ENCODE measurements at regions of chr15 and their contacts with region 1.

Region 1: DNA sequence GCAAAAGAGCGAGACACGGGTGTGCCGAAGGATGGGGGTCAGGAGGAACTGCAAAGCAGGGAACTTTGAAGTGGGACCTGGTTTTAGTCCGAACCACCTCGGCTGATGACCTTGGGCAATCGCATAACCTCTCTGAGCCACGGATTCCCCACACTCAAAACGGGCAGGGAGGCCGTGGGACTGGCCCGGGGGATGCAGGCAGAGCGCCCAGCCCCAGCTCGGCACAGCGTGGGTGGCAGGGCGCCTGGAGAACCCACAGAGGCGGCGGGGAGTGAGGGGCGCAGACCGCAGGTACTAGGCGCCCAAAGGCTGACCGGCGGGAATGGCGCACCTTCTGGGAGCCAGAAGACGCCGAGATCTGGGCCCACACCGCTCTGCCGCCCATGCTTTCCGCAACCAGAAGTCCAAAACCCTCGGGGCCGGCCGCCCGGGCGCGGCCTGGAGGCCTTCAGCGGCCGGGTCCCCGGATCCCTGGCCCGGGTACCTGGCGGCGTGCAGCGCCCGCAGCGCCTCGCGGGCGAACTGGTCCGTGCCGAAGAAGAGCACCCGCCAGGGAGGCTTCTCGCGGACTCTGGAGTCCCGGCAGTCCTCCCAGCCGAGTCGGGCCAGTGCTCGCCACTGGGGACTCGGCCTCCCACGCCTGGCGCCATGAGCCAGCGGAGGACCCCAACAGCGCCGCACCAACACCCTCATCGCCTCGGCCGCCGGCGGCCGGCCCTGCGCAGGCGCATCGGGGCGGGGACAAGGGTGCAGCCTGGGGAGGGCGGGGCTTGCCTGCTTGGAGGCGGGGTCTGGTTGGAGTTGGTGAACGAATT is at the start of gene MTFMT:
- DNase-seq: peak in 1 of 2 experiments; percentile 98
- H3K4me3 ChIP-seq: peak within 1 kb of the TSS; percentile 75 to 93 (median 88)
- H3K27ac ChIP-seq: no peak within 1 kb of the TSS; the same call in 1 of the 2 replicates
- H3K4me1 ChIP-seq: peaks cover 0 to 2% (median 0%) of the 10 kb centered on the region in 4 experiments; a peak in 1 of 7 replicates
- H3K27me3 ChIP-seq: no peaks in the 10 kb centered on the region
- CTCF ChIP-seq: no peak; a peak in 1 of 4 replicates
- EP300 ChIP-seq: no peak
- POLR2A ChIP-seq: peak; percentile 89 to 90
- RAD21 ChIP-seq: no peak; a peak in 1 of 4 replicates
- total RNA-seq, gene MTFMT: 16.5 and 20.8 TPM in 2 replicates

Region 2: GRCh38 chr15:64961013-64961412 is 68.1 kb before region 1 on chr15:
- CTCF ChIA-PET with region 1: no interaction called
- POLR2A ChIA-PET with region 1: no interaction called
- DNase-seq: no peak
- H3K4me3 ChIP-seq: no peak overlapping the region
- H3K27ac ChIP-seq: no peak overlapping the region
- H3K4me1 ChIP-seq: no peaks in the 10 kb centered on the region
- H3K27me3 ChIP-seq: no peaks in the 10 kb centered on the region
- CTCF ChIP-seq: peak; percentile 41 to 61 (median 55)
- EP300 ChIP-seq: no peak
- POLR2A ChIP-seq: no peak
- RAD21 ChIP-seq: peak; percentile 30 to 50; a peak in 3 of 4 replicates

Region 3: GRCh38 chr15:65054333-65055200 is 25.4 kb after region 1 on chr15:
- CTCF ChIA-PET with region 1: interaction called, 57 read pairs
- POLR2A ChIA-PET with region 1: no interaction called
- DNase-seq: peak in 1 of 2 experiments; percentile 88
- H3K4me3 ChIP-seq: no peak overlapping the region
- H3K27ac ChIP-seq: no peak overlapping the region
- H3K4me1 ChIP-seq: no peaks in the 10 kb centered on the region
- H3K27me3 ChIP-seq: no peaks in the 10 kb centered on the region; a peak in 2 of 7 replicates
- CTCF ChIP-seq: peak; percentile 95 to 97 (median 97)
- EP300 ChIP-seq: no peak
- POLR2A ChIP-seq: no peak
- RAD21 ChIP-seq: peak; percentile 96

Region 4: DNA sequence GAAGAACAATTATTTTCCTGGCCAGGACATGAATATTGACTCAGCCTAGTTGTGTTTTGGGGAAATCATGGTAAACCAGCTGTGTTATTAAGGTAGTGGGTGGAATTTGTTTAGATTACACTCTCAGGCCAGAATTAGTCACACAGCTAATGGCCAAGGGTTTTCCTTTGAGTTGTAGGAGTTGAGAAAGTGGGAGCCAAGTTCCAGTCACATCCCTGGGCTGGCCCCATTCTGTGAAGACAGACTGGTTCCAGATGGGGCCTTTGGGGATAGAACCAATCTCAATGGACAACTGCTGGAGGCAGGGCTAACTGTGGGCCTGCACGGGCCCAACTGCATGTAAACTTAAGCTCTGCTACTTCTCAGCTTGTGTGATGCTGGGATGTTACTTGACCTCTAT is 40.1 kb after region 1 on chr15:
- CTCF ChIA-PET with region 1: interaction called, 21 read pairs
- POLR2A ChIA-PET with region 1: no interaction called
- DNase-seq: no peak
- H3K4me3 ChIP-seq: no peak overlapping the region
- H3K27ac ChIP-seq: no peak overlapping the region
- H3K4me1 ChIP-seq: peaks cover 5 to 19% (median 7%) of the 10 kb centered on the region in 4 experiments
- H3K27me3 ChIP-seq: peaks cover 0 to 6% (median 1%) of the 10 kb centered on the region in 4 experiments; a peak in 3 of 7 replicates
- CTCF ChIP-seq: no peak
- EP300 ChIP-seq: no peak
- POLR2A ChIP-seq: no peak
- RAD21 ChIP-seq: no peak

Region 5: DNA sequence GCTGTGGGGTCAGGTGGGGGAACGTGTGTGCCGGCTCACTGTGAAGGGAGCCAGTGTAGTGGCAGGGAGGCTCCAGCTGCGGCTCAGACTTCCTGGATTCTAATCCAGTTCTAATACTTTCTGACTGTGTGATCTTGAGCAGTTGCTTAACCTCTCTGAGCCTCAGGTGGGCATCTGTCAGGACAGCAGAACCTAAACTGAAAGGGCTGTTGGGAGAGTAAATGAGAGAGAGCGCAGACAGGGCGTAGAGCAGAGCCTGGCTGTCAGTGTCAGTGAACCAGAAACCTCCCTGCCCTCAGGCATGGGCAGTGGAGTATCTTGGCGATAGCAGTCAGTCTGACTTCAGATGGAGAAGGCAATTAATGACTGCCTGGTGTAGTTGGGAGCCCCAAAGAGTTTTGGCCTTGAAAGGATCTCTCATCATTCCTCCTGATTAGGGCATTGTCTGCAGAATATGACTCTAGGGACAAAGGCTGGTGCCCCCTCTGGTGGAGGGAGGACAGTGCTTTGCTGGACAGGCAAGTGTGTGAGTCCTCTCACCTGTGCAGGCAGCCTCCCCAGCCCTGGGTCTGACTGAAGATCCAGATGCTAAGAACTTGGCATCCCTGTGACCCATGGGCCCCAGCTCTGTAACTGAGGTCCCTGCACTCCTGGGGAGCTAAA is 57.0 kb after region 1 on chr15:
- CTCF ChIA-PET with region 1: interaction called, 43 read pairs
- POLR2A ChIA-PET with region 1: no interaction called
- DNase-seq: peak in 1 of 2 experiments; percentile 77
- H3K4me3 ChIP-seq: no peak overlapping the region
- H3K27ac ChIP-seq: no peak overlapping the region
- H3K4me1 ChIP-seq: peaks cover 15 to 32% (median 23%) of the 10 kb centered on the region in 4 experiments
- H3K27me3 ChIP-seq: peaks cover 0 to 7% (median 2%) of the 10 kb centered on the region in 4 experiments; a peak in 5 of 7 replicates
- CTCF ChIP-seq: peak; percentile 68 to 87 (median 82)
- EP300 ChIP-seq: no peak
- POLR2A ChIP-seq: no peak
- RAD21 ChIP-seq: peak; percentile 47 to 62

Region 6: DNA sequence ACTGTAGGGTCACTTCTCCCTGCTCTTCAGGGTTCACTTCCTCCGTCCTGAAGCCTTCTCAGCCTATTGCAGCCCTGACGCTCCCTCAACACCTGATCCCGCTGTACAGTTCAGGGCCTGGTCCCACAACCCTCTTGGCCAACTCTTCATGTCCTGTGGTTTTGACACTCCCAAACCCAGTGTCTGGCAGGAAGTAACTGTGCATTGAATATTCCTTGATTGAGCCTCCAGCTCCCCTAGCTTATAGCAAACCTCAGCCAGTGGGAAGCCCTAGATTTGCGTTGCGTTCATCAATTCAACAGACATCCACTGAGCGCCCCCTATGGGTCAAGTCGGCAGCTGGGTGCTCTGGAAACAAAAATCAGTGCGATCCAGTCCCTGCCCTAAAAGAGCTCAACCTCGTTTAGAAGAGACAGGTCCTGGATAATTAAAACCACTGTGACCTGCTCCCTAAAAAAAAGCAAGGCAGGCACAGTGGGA is 72.3 kb after region 1 on chr15:
- CTCF ChIA-PET with region 1: interaction called, 33 read pairs
- POLR2A ChIA-PET with region 1: interaction called, 3 read pairs
- DNase-seq: peak; percentile 73 to 96
- H3K4me3 ChIP-seq: peak overlapping the region; percentile 36 to 67 (median 58)
- H3K27ac ChIP-seq: no peak overlapping the region
- H3K4me1 ChIP-seq: peaks cover 0 to 2% (median 0%) of the 10 kb centered on the region in 4 experiments; a peak in 2 of 7 replicates
- H3K27me3 ChIP-seq: peaks cover 0 to 11% (median 5%) of the 10 kb centered on the region in 4 experiments; a peak in 3 of 7 replicates
- CTCF ChIP-seq: peak; percentile 74 to 97 (median 92)
- EP300 ChIP-seq: no peak
- POLR2A ChIP-seq: no peak
- RAD21 ChIP-seq: peak; percentile 90

Measured in H1 (cell line).